Activated CD8-positive, alpha-beta memory T cell treated with anti-CD3 and anti-CD28 coated beads, Interleukin-2, amount 10 ng/mL, durations not matched to agents 7 days and 5 days (primary cell): ENCODE measurements at regions of chr17 and their contacts with region 1.

Region 1: DNA sequence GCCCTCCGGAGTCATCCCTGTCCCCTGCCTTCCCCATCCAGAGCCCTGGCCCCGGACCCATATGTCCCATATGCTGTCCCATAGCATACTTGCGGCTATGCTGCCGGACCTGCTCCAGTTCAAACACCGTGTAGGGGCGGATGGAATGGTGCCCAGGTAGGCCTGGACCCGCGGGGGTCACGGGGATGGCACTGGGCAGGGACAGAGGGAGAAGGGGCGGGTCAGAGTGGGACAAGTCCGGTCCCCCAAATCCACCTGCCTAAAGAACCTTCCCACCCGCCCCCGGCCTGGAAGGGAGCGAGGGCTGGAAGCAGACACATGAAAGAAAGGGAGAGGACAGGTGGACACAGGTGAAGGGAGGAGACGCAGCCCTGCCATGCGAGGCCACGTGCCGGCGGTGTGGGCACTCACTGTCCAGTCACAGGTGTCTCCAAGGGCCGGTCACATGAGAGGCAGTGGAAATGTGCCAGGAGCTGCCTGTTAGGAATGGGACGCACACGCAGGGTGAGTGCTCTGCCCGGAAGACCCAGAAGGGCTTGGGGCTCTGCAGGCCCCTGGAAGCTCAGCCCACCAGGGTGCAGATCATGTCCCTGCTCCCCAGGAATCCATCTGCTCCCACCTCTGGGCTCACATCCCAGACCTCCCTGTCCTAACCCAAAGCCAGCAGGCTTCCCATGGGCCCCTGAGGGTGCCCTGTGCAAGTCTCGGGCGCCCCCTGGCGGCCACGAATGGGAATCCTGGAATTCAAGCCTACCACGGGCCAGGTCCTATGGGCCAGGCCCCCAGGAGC is 14.0 kb downstream of the UBALD2 start:
- DNase-seq: peak; percentile 89
- ATAC-seq: peak; percentile 88
- H3K4me3 Mint-ChIP-seq: no peak overlapping the region
- H3K27ac Mint-ChIP-seq: no peak overlapping the region
- H3K4me1 Mint-ChIP-seq: peaks cover 4% of the 10 kb centered on the region
- H3K27me3 Mint-ChIP-seq: no peaks in the 10 kb centered on the region

Region 2: DNA sequence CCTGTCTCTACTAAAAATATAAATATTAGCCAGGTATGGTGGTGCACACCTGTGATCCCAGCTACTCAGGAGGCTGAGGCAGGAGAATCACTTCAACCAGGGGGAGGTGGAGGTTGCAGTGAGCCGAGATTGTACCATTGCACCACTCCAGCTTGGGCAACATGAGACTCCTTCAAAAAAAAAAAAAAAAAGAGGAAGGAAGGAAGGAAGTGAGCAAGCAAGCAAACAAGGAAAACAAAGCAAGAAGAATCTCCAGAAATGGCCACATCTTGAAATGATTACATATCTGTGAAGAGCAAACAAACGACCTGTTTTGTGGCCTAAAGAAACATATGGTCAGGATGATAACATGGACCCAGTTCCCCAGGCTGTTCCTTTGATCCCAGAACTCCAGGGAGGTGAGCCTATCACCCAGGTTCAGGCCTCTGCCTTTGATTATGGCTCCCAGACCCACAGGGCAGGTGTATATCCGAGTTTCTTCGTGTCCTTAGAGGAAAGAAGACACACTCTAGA is 309.1 kb before region 1 on chr17:
- CTCF ChIA-PET with region 1: no interaction called
- DNase-seq: no peak
- ATAC-seq: no peak
- H3K4me3 Mint-ChIP-seq: no peak overlapping the region
- H3K27ac Mint-ChIP-seq: no peak overlapping the region
- H3K4me1 Mint-ChIP-seq: peaks cover 6% of the 10 kb centered on the region
- H3K27me3 Mint-ChIP-seq: no peaks in the 10 kb centered on the region

Region 3: DNA sequence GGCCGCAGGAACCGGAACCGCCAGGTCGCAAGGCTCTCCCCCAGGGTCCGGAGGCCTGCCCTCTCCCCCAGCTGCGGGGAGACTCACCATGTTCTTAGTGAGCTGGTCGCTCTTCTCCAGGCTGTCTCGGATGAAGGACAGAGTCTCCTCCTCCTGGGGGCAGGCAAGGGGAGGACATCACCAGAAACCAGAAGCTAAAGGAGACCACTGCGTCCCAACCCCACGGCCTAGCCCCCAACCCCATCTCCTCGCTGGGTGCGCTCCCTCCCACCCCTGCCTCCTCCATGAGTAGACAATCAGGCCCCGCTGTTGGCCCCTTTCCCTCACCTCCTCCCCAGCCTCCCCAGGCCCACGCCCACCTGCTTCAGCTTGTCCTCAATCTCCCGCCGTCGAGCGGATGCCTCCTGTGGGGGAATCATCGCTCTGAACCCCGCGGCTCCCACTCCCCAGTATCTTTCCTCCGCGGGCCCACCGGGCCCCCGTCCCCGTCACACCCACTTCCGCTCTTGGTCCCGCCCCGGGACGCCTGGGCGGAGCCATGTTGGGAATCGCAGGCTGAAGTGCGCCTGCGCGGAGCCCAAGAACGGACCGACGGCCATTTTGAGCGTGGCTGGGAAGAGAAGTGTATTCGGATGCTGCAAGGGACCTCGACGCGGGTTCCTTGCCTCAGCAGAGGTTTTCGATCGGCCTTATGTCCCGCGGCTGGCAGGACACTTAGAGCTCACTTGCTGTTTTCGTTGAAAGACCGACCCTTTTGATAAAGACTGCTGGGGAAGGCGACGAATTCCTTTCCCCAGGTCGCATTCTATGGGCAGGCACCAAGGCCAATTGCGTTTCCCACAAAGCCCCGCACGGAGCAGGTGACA is 175.6 kb before region 1 on chr17 and contains the start of gene EXOC7:
- CTCF ChIA-PET with region 1: interaction called, 21 read pairs
- DNase-seq: peak; percentile 94
- ATAC-seq: peak; percentile 94
- H3K4me3 Mint-ChIP-seq: peak within 1 kb of the TSS; percentile 98
- H3K27ac Mint-ChIP-seq: peak within 1 kb of the TSS; percentile 97
- H3K4me1 Mint-ChIP-seq: peaks cover 16% of the 10 kb centered on the region
- H3K27me3 Mint-ChIP-seq: no peaks in the 10 kb centered on the region
- total RNA-seq, gene EXOC7: 132 to 137 TPM

Region 4: DNA sequence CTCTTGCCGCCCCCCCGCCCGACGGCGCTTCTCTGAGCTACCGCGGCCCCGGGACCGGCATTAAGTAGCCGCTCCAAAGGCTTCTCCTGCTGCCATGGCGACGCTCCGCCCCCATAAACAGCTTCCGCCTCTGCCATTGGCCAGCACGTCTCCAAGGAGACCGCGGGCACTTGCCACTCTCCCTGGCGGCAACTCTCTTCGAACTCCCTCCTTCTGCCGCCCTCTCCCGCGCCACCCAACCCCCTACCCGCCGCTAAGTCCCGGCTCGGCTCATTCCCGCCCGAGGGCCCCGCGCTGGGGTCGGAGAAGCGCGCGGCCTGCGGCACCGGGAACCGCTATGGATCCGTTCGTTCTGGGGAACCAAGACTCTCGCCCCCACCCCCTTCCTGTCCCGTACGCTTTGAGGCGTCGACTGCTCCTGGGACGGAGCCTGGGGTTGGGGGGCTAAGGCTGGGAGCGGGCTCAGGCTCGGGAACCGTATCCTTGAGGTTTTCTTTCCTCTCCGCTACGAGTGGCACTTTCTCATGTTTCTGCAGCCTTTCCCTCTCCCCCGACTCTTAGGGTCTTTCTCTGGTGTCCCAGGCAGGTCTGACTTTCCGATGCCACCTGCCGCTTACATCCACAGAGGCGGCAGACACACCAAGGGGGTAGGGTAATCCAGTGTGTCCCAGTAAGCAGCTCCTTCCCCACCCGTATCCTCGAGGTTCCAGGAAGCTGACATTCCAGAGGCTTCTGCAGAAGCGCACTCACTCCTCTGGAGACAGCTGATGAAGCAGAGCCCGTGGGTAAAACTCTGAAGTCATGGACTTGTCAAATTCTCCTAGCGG is 137.7 kb before region 1 on chr17 and contains the start of gene FOXJ1:
- CTCF ChIA-PET with region 1: interaction called, 18 read pairs
- DNase-seq: peak; percentile 94
- ATAC-seq: peak; percentile 73
- H3K4me3 Mint-ChIP-seq: peak within 1 kb of the TSS; percentile 67
- H3K27ac Mint-ChIP-seq: no peak within 1 kb of the TSS
- H3K4me1 Mint-ChIP-seq: peaks cover 56% of the 10 kb centered on the region
- H3K27me3 Mint-ChIP-seq: peaks cover 14% of the 10 kb centered on the region
- total RNA-seq, gene FOXJ1: 0.55 TPM in 1 of 2 experiments, not detected in the other

Region 5: GRCh38 chr17:76166168-76166567 is 113.0 kb before region 1 on chr17:
- CTCF ChIA-PET with region 1: interaction called, 13 read pairs
- DNase-seq: no peak
- ATAC-seq: no peak
- H3K4me3 Mint-ChIP-seq: no peak overlapping the region
- H3K27ac Mint-ChIP-seq: no peak overlapping the region
- H3K4me1 Mint-ChIP-seq: peaks cover 2% of the 10 kb centered on the region
- H3K27me3 Mint-ChIP-seq: no peaks in the 10 kb centered on the region

Region 6: GRCh38 chr17:76208120-76208519 is 71.0 kb before region 1 on chr17:
- CTCF ChIA-PET with region 1: interaction called, 19 read pairs
- DNase-seq: peak; percentile 67
- ATAC-seq: peak; percentile 81
- H3K4me3 Mint-ChIP-seq: no peak overlapping the region
- H3K27ac Mint-ChIP-seq: peak overlapping the region; percentile 86
- H3K4me1 Mint-ChIP-seq: peaks cover 67% of the 10 kb centered on the region
- H3K27me3 Mint-ChIP-seq: no peaks in the 10 kb centered on the region

Region 7: DNA sequence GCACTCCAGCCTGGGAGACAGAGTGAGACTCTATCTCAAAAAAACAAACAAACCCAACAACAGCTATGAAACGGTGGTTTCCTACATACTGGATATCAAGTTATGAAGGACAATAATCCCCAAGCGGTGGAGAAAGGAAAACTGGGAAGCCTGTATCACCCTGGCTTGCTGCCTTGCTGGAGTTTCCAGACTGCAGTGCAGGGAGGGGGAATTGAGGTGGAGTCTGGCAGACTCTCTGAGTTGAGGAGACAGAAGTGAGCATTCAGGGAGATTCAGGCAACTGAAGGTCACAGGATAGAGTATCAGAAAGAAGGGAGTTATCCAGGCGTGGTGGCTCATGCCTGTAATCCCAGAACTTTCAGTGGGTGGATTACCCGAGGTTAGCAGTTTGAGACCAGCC is 17.0 kb after region 1 on chr17:
- CTCF ChIA-PET with region 1: interaction called, 21 read pairs
- DNase-seq: no peak
- ATAC-seq: no peak
- H3K4me3 Mint-ChIP-seq: no peak overlapping the region
- H3K27ac Mint-ChIP-seq: no peak overlapping the region
- H3K4me1 Mint-ChIP-seq: peaks cover 3% of the 10 kb centered on the region
- H3K27me3 Mint-ChIP-seq: no peaks in the 10 kb centered on the region

Region 8: GRCh38 chr17:76370261-76370993 is 91.3 kb after region 1 on chr17:
- CTCF ChIA-PET with region 1: no interaction called
- DNase-seq: no peak
- ATAC-seq: no peak
- H3K4me3 Mint-ChIP-seq: no peak overlapping the region
- H3K27ac Mint-ChIP-seq: no peak overlapping the region
- H3K4me1 Mint-ChIP-seq: no peaks in the 10 kb centered on the region
- H3K27me3 Mint-ChIP-seq: no peaks in the 10 kb centered on the region